Adrenal gland (tissue), 19 donors: ENCODE measurements at regions of chr19 and their contacts with region 1.

Region 1: DNA sequence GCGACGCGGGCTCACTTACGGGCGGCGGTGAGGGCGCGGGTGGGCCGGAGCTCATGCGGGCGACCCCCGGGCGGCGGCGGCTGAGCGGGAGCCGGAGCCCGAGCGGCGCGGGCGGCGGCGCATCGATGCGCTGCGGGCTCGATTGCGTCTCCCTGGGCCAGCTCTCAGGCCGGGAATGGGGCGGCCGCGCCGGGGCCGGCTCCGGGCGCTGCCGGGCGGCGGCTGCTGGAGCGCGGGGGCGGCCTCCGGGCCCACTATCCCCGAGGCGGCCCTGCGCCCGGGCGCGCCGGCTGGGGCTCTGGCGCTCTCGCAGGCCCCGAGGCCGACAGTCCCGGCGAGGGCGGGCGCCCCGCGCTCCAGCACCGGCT is 1.4 kb upstream of the TSHZ3 start:
- DNase-seq: peak in 6 of 7 donors; percentile 36 to 61 (median 48)
- H3K4me3 ChIP-seq: peak overlapping the region in 3 of 4 donors; percentile 56 to 100 (median 96)
- H3K27ac ChIP-seq: peak overlapping the region in 4 of 5 donors; percentile 67 to 90 (median 82)
- H3K4me1 ChIP-seq: peaks cover 4 to 27% of the 10 kb centered on the region in 2 donors
- H3K27me3 ChIP-seq: peaks cover 12% of the 10 kb centered on the region
- CTCF ChIP-seq: no peak
- POLR2A ChIP-seq: no peak

Region 2: GRCh38 chr19:30669329-30670010 is 681.2 kb before region 1 on chr19:
- intact Hi-C with region 1: loop called in 1 of 2 experiments (anchors 10 kb)
- DNase-seq: peak; percentile 48 to 81 (median 76)
- H3K4me3 ChIP-seq: no peak overlapping the region
- H3K27ac ChIP-seq: no peak overlapping the region
- H3K4me1 ChIP-seq: peaks cover 0 to 14% of the 10 kb centered on the region in 2 donors
- H3K27me3 ChIP-seq: no peaks in the 10 kb centered on the region
- CTCF ChIP-seq: peak; percentile 52 to 89 (median 68)
- POLR2A ChIP-seq: no peak

Region 3: DNA sequence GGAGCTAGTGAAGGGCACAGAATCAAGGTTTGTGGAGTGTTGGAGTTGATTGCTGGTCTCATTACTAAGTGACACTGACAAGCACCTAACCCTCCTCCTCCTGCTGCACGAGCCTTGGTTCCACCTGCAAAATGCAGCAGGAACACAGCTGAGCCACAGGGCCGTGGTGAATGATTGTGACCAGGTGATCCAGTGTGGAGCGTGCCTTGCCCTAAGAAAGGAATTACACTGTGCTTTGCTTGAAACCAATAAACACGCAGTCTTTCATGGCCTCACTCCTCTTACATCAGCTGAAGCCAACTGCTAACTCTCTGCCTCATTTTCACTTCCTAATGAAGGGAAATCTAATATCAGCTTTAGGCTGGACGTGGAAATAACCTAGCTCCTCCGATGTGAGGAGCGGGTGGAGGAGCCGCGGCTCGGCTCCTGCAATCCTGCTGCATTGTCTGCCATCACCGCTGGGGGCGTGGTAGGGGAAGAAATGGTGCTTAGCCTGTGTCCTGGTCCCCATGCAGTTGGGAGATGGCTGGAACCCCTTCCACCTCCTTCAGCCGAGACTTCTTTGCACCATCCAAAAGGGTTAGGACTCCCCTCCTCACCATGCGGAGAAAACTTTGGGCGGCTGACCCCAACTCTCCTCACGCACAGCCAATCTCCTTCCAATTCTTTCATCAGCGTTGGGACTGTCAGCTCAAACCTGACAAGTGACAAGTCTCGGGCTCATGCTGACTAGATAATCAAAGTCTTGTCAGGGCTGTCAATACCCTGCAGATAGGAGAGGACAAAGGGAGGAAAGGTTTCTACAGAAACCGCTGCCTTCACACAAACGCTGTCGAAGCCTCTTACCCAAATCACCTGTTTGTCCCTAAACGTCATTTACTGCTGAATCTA is 550.6 kb before region 1 on chr19:
- intact Hi-C with region 1: loop called in 1 of 2 experiments (anchors 10 kb)
- DNase-seq: peak; percentile 31 to 63 (median 47)
- H3K4me3 ChIP-seq: no peak overlapping the region
- H3K27ac ChIP-seq: no peak overlapping the region
- H3K4me1 ChIP-seq: no peaks in the 10 kb centered on the region
- H3K27me3 ChIP-seq: peaks cover 8% of the 10 kb centered on the region
- CTCF ChIP-seq: peak; percentile 50 to 70 (median 56)
- POLR2A ChIP-seq: no peak